ENCODE measurements at regions of chr16 and their contacts with region 1.

Region 1: DNA sequence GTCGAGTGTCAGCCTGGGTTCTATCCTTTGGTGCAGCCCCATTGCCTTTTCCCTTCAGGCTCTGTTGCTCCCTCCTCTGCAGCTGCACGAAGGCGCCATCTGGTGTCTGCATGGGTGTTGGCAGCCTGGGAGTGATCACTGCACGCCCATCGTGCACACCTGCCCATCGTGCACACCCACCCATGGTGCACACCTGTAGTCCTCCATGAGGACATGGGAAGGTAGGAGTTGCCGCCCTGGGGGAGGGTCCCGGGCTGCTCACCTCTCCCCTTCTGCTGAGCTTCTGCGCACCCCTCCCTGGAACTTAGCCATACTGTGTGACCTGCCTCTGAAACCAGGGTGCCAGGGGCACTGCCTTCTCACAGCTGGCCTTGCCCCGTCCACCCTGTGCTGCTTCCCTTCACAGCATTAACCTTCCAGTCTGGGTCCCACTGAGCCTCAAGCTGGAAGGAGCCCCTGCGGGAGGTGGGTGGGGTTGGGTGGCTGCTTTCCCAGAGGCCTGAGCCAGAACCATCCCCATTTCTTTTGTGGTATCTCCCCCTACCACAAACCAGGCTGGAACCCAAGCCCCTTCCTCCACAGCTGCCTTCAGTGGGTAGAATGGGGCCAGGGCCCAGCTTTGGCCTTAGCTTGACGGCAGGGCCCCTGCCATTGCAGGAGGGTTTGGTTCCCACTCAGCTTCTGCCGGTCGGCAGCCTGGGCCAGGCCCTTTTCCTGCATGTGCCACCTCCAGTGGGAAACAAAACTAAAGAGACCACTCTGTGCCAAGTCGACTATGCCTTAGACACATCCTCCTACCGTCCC is 2.9 kb downstream of the CTRL start:
- DNase-seq: peak; percentile 41
- ATAC-seq: peak; percentile 84
- H3K4me3 ChIP-seq: no peak overlapping the region
- H3K27ac ChIP-seq: no peak overlapping the region
- H3K4me1 ChIP-seq: no peaks in the 10 kb centered on the region
- H3K27me3 ChIP-seq: no peaks in the 10 kb centered on the region
- CTCF ChIP-seq: peak; percentile 91

Region 2: DNA sequence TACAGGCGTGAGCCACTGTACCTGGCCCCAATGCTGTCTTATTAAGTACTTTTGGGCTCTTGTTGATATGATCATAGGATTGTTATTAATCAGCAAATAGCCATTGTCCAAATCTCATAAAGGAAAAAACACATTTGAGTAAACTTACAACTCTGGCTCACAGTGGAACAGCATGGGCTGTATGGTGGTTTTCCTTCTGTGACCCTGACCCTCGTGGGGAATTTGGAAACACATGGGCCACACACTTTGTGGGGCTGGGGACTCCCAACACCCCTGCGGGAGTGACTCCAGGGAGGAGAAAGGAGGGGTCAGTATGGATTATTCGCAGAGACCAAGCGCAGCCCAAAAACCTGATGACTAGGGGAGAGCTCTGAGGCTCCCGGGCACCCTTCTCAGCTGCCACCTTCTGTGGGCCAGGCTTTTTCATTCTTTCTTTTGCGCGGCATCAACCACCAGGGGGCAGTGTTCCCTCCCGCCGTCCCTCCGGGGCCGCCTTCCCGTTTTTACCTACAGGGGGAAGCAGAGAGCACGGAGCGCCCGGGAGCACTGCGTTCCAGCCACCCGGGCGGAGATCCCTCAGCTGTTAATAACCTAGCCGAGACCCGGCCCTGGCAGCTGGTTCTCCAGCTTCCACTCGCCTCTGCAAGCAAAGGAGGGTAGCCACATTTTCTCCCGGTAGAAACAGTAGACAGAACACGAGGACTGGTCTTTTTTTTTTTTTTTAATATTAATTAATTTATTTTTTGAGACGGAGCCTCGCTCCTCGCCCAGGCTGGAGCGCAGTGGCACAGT is 112.3 kb before region 1 on chr16:
- CTCF ChIA-PET with region 1: interaction called, 13 read pairs
- POLR2A ChIA-PET with region 1: interaction called, 4 read pairs
- in situ Hi-C with region 1: no loop called
- intact Hi-C with region 1: no loop called
- DNase-seq: peak; percentile 38
- ATAC-seq: peak; percentile 96
- H3K4me3 ChIP-seq: no peak overlapping the region
- H3K27ac ChIP-seq: no peak overlapping the region
- H3K4me1 ChIP-seq: no peaks in the 10 kb centered on the region
- H3K27me3 ChIP-seq: no peaks in the 10 kb centered on the region
- CTCF ChIP-seq: peak; percentile 99

Measured in Panc1 (cell line).